Activated CD4-positive, alpha-beta T cell treated with anti-CD3 and anti-CD28 coated beads, Interleukin-2, amount 10 ng/mL, durations not matched to agents 24 days and 14 days (primary cell): ENCODE measurements at regions of chr17 and their contacts with region 1.

Region 1: GRCh38 chr17:35540589-35541404 is 3.3 kb upstream of the SLFN12L start:
- DNase-seq: peak; percentile 81
- H3K4me3 Mint-ChIP-seq: peak overlapping the region; percentile 90
- H3K27ac Mint-ChIP-seq: peak overlapping the region; percentile 95
- H3K4me1 Mint-ChIP-seq: peaks cover 41% of the 10 kb centered on the region
- H3K27me3 Mint-ChIP-seq: no peaks in the 10 kb centered on the region

Region 2: DNA sequence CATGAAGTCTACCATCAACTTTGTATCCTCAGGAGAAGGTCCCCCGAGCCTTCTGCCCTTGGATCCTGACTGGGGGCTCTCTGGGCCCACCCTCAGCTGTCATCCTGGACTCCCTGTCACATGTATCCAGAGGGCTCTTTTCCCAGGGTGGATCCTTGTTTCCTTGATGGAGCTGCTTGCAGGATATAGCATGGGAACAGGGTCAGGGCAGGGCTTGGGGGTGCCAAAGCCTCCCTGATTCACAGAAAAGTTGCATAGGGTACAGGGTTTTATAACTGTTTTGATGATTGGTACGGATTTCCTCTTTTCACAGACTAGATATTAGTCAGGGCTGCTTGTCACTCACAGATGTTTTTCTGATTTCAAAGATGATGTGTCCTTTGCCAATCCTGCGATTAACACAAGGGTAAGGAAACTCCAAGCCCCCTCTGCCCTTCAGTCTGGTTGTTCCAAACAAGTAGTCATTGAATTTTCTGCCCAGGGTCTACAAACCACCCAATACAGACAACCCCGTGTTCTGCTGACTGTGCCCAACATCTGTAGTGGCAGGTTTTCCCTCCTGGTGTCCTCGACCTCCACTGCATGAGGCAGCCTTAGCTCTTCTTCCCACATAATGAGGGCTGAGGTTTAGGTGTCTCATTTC is 326.0 kb before region 1 on chr17:
- intact Hi-C with region 1: loop called (anchors 1 kb)
- DNase-seq: peak; percentile 82
- H3K4me3 Mint-ChIP-seq: peak overlapping the region; percentile 80
- H3K27ac Mint-ChIP-seq: peak overlapping the region; percentile 90
- H3K4me1 Mint-ChIP-seq: peaks cover 78% of the 10 kb centered on the region
- H3K27me3 Mint-ChIP-seq: no peaks in the 10 kb centered on the region

Region 3: GRCh38 chr17:35341411-35341992 is 199.3 kb before region 1 on chr17:
- intact Hi-C with region 1: loop called (anchors 1 kb)
- DNase-seq: peak; percentile 84
- H3K4me3 Mint-ChIP-seq: peak overlapping the region; percentile 53
- H3K27ac Mint-ChIP-seq: peak overlapping the region; percentile 17
- H3K4me1 Mint-ChIP-seq: peaks cover 29% of the 10 kb centered on the region
- H3K27me3 Mint-ChIP-seq: peaks cover 31% of the 10 kb centered on the region

Region 4: GRCh38 chr17:35432176-35433074 is 108.4 kb before region 1 on chr17 and contains the start of gene SLFN12:
- intact Hi-C with region 1: loop called (anchors 2 kb)
- DNase-seq: peak; percentile 81
- H3K4me3 Mint-ChIP-seq: peak within 1 kb of the TSS; percentile 88
- H3K27ac Mint-ChIP-seq: peak within 1 kb of the TSS; percentile 92
- H3K4me1 Mint-ChIP-seq: peaks cover 51% of the 10 kb centered on the region
- H3K27me3 Mint-ChIP-seq: no peaks in the 10 kb centered on the region
- total RNA-seq, gene SLFN12: 5.0 and 7.8 TPM in 2 replicates

Region 5: GRCh38 chr17:35486920-35487732 is 53.7 kb before region 1 on chr17:
- intact Hi-C with region 1: loop called (anchors 1 kb)
- DNase-seq: peak; percentile 91
- H3K4me3 Mint-ChIP-seq: peak overlapping the region; percentile 92
- H3K27ac Mint-ChIP-seq: peak overlapping the region; percentile 96
- H3K4me1 Mint-ChIP-seq: peaks cover 57% of the 10 kb centered on the region
- H3K27me3 Mint-ChIP-seq: no peaks in the 10 kb centered on the region

Region 6: GRCh38 chr17:35587074-35587971 is 46.5 kb after region 1 on chr17 and contains the start of gene AP2B1:
- intact Hi-C with region 1: loop called (anchors 2 kb)
- DNase-seq: peak; percentile 99
- H3K4me3 Mint-ChIP-seq: peak within 1 kb of the TSS; percentile 98
- H3K27ac Mint-ChIP-seq: peak within 1 kb of the TSS; percentile 98
- H3K4me1 Mint-ChIP-seq: peaks cover 24% of the 10 kb centered on the region
- H3K27me3 Mint-ChIP-seq: peaks cover 12% of the 10 kb centered on the region
- total RNA-seq, gene AP2B1: 164 and 172 TPM in 2 replicates